T-cell (primary cell): ENCODE measurements at regions of chr15 and their contacts with region 1.

Region 1: DNA sequence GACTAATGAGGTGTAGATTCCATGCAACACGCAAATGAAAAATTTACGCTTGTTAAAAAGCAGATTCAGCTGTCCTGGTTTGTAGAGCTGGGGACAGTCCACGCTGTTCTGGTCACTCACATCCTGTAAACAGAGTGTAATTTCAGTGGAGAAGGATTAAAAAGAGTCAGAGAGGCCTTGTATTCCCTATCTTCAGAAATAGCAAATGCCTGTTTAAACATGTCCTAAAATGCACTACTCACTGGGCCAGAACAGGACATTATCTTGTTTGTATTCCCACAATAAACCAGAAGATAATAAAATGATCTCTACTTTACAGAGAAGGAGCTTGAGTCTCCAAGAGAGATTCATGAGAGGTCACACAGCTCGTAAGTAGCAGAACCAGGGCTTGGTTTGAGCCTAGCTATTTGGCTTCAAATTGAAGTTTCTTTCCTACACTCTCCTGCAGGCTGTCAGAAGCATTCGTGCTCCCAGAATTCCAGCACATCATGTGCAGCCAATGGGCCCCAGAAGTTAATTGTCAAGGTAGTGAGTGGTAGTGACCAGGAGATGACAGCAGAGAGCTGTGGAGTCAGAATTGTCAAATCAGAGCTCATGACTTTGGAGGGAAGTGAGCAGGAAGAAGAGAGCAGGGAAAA is 242.5 kb downstream of the ATP8B4 start:
- DNase-seq: peak in 1 of 35 experiments; percentile 7
- ATAC-seq: no peak
- H3K4me3 ChIP-seq: no peak overlapping the region
- H3K4me3 Mint-ChIP-seq: no peak overlapping the region
- H3K27ac ChIP-seq: no peak overlapping the region
- H3K27ac Mint-ChIP-seq: no peak overlapping the region
- H3K4me1 ChIP-seq: no peaks in the 10 kb centered on the region
- H3K4me1 Mint-ChIP-seq: no peaks in the 10 kb centered on the region
- H3K27me3 ChIP-seq: no peaks in the 10 kb centered on the region
- H3K27me3 Mint-ChIP-seq: no peaks in the 10 kb centered on the region

Region 2: GRCh38 chr15:49895337-49896223 is 19.1 kb after region 1 on chr15:
- CTCF ChIA-PET with region 1: no interaction called
- POLR2A ChIA-PET with region 1: no interaction called
- DNase-seq: no peak
- ATAC-seq: no peak
- H3K4me3 ChIP-seq: no peak overlapping the region
- H3K4me3 Mint-ChIP-seq: no peak overlapping the region
- H3K27ac ChIP-seq: no peak overlapping the region
- H3K27ac Mint-ChIP-seq: no peak overlapping the region
- H3K4me1 ChIP-seq: no peaks in the 10 kb centered on the region
- H3K4me1 Mint-ChIP-seq: no peaks in the 10 kb centered on the region
- H3K27me3 ChIP-seq: no peaks in the 10 kb centered on the region
- H3K27me3 Mint-ChIP-seq: peaks cover 0 to 2% of the 10 kb centered on the region in 2 donors

Region 3: GRCh38 chr15:49908236-49908932 is 31.9 kb after region 1 on chr15:
- CTCF ChIA-PET with region 1: no interaction called
- POLR2A ChIA-PET with region 1: no interaction called
- DNase-seq: no peak
- ATAC-seq: no peak
- H3K4me3 ChIP-seq: no peak overlapping the region
- H3K4me3 Mint-ChIP-seq: no peak overlapping the region
- H3K27ac ChIP-seq: no peak overlapping the region
- H3K27ac Mint-ChIP-seq: no peak overlapping the region
- H3K4me1 ChIP-seq: no peaks in the 10 kb centered on the region
- H3K4me1 Mint-ChIP-seq: no peaks in the 10 kb centered on the region
- H3K27me3 ChIP-seq: peaks cover 0 to 10% of the 10 kb centered on the region in 2 experiments
- H3K27me3 Mint-ChIP-seq: peaks cover 8 to 11% of the 10 kb centered on the region in 2 donors

Region 4: GRCh38 chr15:50003786-50004334 is 127.3 kb after region 1 on chr15:
- CTCF ChIA-PET with region 1: interaction called in 1 of 2 experiments, 10 read pairs
- POLR2A ChIA-PET with region 1: no interaction called
- DNase-seq: peak; percentile 4 to 75 (median 47)
- ATAC-seq: peak; percentile 77 to 96 (median 83)
- H3K4me3 ChIP-seq: no peak overlapping the region
- H3K4me3 Mint-ChIP-seq: no peak overlapping the region
- H3K27ac ChIP-seq: no peak overlapping the region
- H3K27ac Mint-ChIP-seq: peak overlapping the region in 1 of 2 donors; percentile 46
- H3K4me1 ChIP-seq: peaks cover 0 to 9% of the 10 kb centered on the region in 2 experiments
- H3K4me1 Mint-ChIP-seq: peaks cover 0 to 12% (median 5%) of the 10 kb centered on the region in 3 donors
- H3K27me3 ChIP-seq: no peaks in the 10 kb centered on the region
- H3K27me3 Mint-ChIP-seq: peaks cover 3 to 6% of the 10 kb centered on the region in 2 donors